Sciatic nerve (tissue), 2 donors: ENCODE measurements at regions of chr3 and their contacts with region 1.

Region 1: DNA sequence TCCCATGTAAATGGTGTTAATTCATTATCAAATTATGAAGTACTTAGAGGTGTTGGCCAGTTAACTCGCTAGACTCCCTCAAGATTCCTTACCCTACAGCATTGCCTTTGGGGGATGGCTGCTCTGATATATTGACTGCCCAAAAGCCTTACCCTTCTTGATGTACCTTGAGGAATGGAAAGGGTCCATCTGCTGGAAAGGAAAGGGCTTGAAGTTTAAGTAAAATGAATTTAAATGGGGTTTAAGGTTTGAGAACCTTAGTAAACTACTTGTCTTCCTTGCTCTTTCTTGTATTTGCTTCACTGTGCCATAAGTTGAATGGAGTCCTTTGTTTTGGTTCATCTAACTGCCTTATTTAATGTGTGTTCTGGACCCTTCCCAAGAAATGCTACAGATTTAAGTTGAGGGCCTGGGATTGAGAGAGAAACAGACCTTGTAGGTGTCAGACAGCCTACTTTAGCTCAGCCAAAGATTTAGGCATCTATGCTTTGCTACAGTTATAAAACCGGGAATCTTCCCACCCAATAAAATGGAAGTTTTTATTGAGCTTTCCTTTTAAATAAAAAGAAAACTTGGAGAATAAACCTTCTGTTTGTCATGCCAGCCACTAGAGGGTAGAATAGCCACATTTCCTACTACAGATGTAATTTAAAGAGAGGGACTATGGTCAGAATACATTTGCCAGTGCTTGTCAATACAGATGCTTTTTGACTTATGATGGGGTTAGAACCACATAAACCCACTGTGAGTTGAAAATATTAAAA is 25.3 kb downstream of the CMSS1 start:
- DNase-seq: no peak
- ATAC-seq: peak; percentile 80

Region 2: GRCh38 chr3:98188545-98188944 is 1654.5 kb before region 1 on chr3:
- intact Hi-C with region 1: no loop called
- DNase-seq: no peak
- ATAC-seq: peak; percentile 62

Region 3: GRCh38 chr3:100254168-100254777 is 411.3 kb after region 1 on chr3:
- intact Hi-C with region 1: loop called (anchors 5 kb)
- DNase-seq: peak; percentile 66
- ATAC-seq: peak; percentile 89